Activated T-helper 2 cell treated with anti-CD3 and anti-CD28 coated beads, Interferon-gamma antibody, Interleukin-2, Interleukin-4, amounts not matched to agents 10 μg/mL and 5 μg/mL and 100 μg/mL, durations not matched to agents 14 hours and 24 hours and 36 hours (primary cell): ENCODE measurements at regions of chr2 and their contacts with region 1.

Region 1: DNA sequence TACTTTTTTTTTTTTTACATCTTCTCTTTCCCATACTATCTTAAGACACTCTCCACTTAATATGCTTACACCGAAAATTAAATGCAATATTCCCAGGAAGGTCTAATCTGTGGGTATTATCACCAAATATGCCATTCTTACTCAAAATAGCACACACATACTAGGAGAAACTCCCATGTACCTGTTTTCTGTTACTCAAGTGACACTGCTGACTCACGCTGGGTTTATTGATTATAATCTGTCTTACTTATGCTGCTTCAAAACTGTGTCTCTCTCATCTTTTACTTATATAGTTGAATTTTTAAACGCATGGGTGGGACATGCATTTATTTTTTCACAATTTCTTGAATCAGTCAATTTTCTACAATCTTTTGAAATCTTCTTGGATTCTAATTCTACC is 29.9 kb downstream of the MRPL19 start:
- DNase-seq: no peak
- H3K4me3 Mint-ChIP-seq: no peak overlapping the region
- H3K27ac Mint-ChIP-seq: peak overlapping the region; percentile 71
- H3K4me1 Mint-ChIP-seq: peaks cover 18% of the 10 kb centered on the region
- H3K27me3 Mint-ChIP-seq: no peaks in the 10 kb centered on the region

Region 2: GRCh38 chr2:75640621-75641121 is 35.8 kb before region 1 on chr2:
- intact Hi-C with region 1: loop called (anchors 1 kb)
- DNase-seq: peak; percentile 16
- H3K4me3 Mint-ChIP-seq: no peak overlapping the region
- H3K27ac Mint-ChIP-seq: no peak overlapping the region
- H3K4me1 Mint-ChIP-seq: peaks cover 4% of the 10 kb centered on the region
- H3K27me3 Mint-ChIP-seq: peaks cover 24% of the 10 kb centered on the region